ENCODE measurements at regions of chr12 and their contacts with region 1.

Region 1: DNA sequence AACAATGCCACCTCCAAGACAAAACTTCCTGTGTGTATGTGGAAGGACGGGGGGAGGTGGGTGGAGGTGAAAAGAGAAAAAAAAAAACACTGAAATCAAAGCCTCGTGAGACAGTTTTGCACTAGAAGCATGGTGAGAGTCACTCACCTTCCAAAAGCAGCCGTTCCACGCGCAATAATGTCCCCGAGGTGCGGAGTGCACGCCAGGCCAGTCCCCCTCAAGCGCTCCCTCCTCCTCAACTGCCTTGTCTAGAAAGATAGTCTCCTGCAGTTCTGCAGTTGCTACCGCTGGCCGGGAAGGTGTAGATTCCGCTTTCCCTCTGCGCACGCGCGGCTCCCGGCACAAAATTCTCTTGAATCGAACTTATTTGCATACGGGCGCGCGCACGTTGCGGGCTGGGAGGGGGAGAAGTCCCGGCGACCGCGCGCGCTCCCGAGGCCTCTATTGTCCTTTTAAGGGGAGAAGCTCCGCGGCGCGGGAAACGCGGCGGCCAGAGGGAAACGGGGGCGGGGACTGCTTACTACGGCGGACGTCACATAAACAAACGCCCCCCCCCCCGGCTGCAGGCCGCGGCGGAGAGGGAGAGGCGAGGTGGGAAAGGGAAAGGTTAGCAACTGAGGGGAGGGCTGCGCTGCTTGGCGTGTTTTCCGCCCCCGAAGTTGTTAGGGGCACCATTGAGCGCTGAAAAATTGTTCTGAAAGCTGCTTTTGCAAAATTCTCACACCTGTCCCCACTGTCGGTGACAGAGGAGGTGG is at the start of gene SINHCAF:
- DNase-seq: peak; percentile 97 to 99 (median 98)
- ATAC-seq: peak; percentile 78
- H3K4me3 ChIP-seq: peak within 1 kb of the TSS; percentile 82
- H3K4me3 Mint-ChIP-seq: peak within 1 kb of the TSS; percentile 89 to 99 (median 96)
- H3K27ac ChIP-seq: peak within 1 kb of the TSS; percentile 93
- H3K27ac Mint-ChIP-seq: peak within 1 kb of the TSS; percentile 81 to 99 (median 93)
- H3K4me1 ChIP-seq: peaks cover 5 to 22% of the 10 kb centered on the region in 2 donors
- H3K4me1 Mint-ChIP-seq: peaks cover 20 to 37% (median 26%) of the 10 kb centered on the region in 7 donors
- H3K27me3 ChIP-seq: no peaks in the 10 kb centered on the region
- H3K27me3 Mint-ChIP-seq: peaks cover 0 to 17% (median 0%) of the 10 kb centered on the region in 5 donors
- total RNA-seq, gene SINHCAF: 80.5 to 114 (median 90.8) TPM

Region 2: DNA sequence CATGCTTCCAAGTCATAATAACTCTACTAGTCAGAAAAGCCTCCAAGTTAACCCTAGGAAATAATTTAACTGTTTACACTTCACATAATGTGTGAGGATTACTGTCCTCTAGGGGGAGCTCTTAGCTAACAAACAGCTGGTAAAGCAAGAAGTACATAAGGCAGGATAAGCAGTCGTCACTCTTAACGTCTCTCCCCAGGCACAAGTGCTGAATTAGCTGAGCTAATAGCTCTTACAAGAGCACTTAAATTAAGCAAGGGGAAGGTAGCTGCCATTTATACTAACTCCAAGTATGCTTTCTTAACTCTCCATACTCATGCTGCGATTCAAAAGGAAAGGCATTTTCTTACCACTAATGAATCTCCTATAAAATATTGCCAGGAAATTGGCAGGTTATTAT is 478.8 kb before region 1 on chr12:
- CTCF ChIA-PET with region 1: no interaction called
- POLR2A ChIA-PET with region 1: no interaction called
- intact Hi-C with region 1: loop called in 1 of 2 experiments (anchors 2 kb)
- DNase-seq: peak in 6 of 9 donors; percentile 37 to 55 (median 41)
- ATAC-seq: peak; percentile 26
- H3K4me3 ChIP-seq: no peak overlapping the region
- H3K4me3 Mint-ChIP-seq: no peak overlapping the region
- H3K27ac ChIP-seq: no peak overlapping the region
- H3K27ac Mint-ChIP-seq: no peak overlapping the region
- H3K4me1 ChIP-seq: no peaks in the 10 kb centered on the region
- H3K4me1 Mint-ChIP-seq: peaks cover 5 to 13% (median 8%) of the 10 kb centered on the region in 7 donors
- H3K27me3 ChIP-seq: no peaks in the 10 kb centered on the region
- H3K27me3 Mint-ChIP-seq: peaks cover 0 to 13% (median 0%) of the 10 kb centered on the region in 5 donors

Region 3: GRCh38 chr12:31406345-31406744 is 80.3 kb after region 1 on chr12:
- CTCF ChIA-PET with region 1: no interaction called
- POLR2A ChIA-PET with region 1: no interaction called
- intact Hi-C with region 1: loop called in 1 of 2 experiments (anchors 5 kb)
- DNase-seq: no peak
- ATAC-seq: no peak
- H3K4me3 ChIP-seq: no peak overlapping the region
- H3K4me3 Mint-ChIP-seq: no peak overlapping the region
- H3K27ac ChIP-seq: no peak overlapping the region
- H3K27ac Mint-ChIP-seq: peak overlapping the region in 1 of 9 donors; percentile 1
- H3K4me1 ChIP-seq: no peaks in the 10 kb centered on the region
- H3K4me1 Mint-ChIP-seq: peaks cover 0 to 7% (median 0%) of the 10 kb centered on the region in 7 donors
- H3K27me3 ChIP-seq: no peaks in the 10 kb centered on the region
- H3K27me3 Mint-ChIP-seq: peaks cover 0 to 2% (median 0%) of the 10 kb centered on the region in 5 donors

Region 4: DNA sequence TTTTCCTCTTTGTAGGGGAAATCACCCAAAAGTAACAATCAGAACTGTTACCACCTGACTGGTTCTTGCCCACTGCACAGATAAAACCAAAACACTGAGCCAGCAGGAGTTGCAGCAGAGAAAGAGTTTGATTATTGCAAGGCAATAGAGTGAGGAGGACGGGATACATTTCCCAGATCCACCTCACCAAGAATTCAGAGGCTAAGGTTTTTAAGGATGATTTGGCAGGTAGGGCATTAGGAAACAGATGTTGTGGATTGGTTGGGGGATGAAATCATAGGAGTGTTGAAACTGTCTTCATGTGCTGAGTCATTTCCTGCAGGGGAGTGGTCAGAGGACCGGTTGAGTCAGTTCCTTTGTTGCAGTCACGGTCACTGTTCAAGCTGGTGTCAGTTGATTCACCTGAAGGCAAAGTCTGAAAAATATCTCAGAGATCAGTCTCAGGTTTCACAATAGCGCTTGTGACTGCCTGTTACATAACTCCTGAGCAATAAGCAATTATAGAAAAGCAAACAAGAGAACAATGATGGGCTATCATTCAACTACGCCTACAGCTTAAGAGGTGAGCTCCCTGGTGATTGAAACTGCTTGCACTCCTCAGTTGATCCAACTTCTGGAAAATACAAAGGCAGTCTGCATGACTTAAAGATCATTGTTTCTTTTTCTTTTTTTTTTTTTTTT is 423.1 kb after region 1 on chr12:
- CTCF ChIA-PET with region 1: no interaction called
- POLR2A ChIA-PET with region 1: no interaction called
- intact Hi-C with region 1: loop called (anchors 5 kb)
- DNase-seq: peak in 1 of 9 donors; percentile 57
- ATAC-seq: peak; percentile 89
- H3K4me3 ChIP-seq: peak overlapping the region; percentile 34
- H3K4me3 Mint-ChIP-seq: peak overlapping the region in 7 of 10 donors; percentile 21 to 66 (median 38)
- H3K27ac ChIP-seq: no peak overlapping the region
- H3K27ac Mint-ChIP-seq: peak overlapping the region in 8 of 9 donors; percentile 14 to 83 (median 63)
- H3K4me1 ChIP-seq: peaks cover 18 to 20% of the 10 kb centered on the region in 2 donors
- H3K4me1 Mint-ChIP-seq: peaks cover 31 to 76% (median 65%) of the 10 kb centered on the region in 7 donors
- H3K27me3 ChIP-seq: no peaks in the 10 kb centered on the region
- H3K27me3 Mint-ChIP-seq: no peaks in the 10 kb centered on the region

Region 5: GRCh38 chr12:32106517-32107358 is 780.7 kb after region 1 on chr12 and contains the start of gene BICD1:
- CTCF ChIA-PET with region 1: no interaction called
- POLR2A ChIA-PET with region 1: no interaction called
- intact Hi-C with region 1: loop called in 1 of 2 experiments (anchors 2 kb)
- DNase-seq: peak; percentile 43 to 84 (median 65)
- ATAC-seq: peak; percentile 90
- H3K4me3 ChIP-seq: peak within 1 kb of the TSS; percentile 90
- H3K4me3 Mint-ChIP-seq: peak within 1 kb of the TSS; percentile 82 to 98 (median 96)
- H3K27ac ChIP-seq: peak within 1 kb of the TSS; percentile 67
- H3K27ac Mint-ChIP-seq: peak within 1 kb of the TSS; percentile 77 to 94 (median 91)
- H3K4me1 ChIP-seq: peaks cover 19 to 22% of the 10 kb centered on the region in 2 donors
- H3K4me1 Mint-ChIP-seq: peaks cover 11 to 42% (median 33%) of the 10 kb centered on the region in 7 donors
- H3K27me3 ChIP-seq: no peaks in the 10 kb centered on the region
- H3K27me3 Mint-ChIP-seq: peaks cover 0 to 13% (median 0%) of the 10 kb centered on the region in 5 donors
- total RNA-seq, gene BICD1: 16.7 to 25.1 (median 18.5) TPM

Region 6: GRCh38 chr12:32755654-32756475 is 1429.8 kb after region 1 on chr12 and contains the start of gene YARS2:
- CTCF ChIA-PET with region 1: no interaction called
- POLR2A ChIA-PET with region 1: interaction called, 3 read pairs
- intact Hi-C with region 1: loop called (anchors 1 to 2 kb)
- DNase-seq: peak; percentile 62 to 86 (median 83)
- ATAC-seq: peak; percentile 92
- H3K4me3 ChIP-seq: peak within 1 kb of the TSS; percentile 68
- H3K4me3 Mint-ChIP-seq: peak within 1 kb of the TSS; percentile 84 to 99 (median 90)
- H3K27ac ChIP-seq: peak within 1 kb of the TSS; percentile 76
- H3K27ac Mint-ChIP-seq: peak within 1 kb of the TSS; percentile 81 to 99 (median 94)
- H3K4me1 ChIP-seq: peaks cover 13% of the 10 kb centered on the region in 2 donors
- H3K4me1 Mint-ChIP-seq: peaks cover 0 to 21% (median 20%) of the 10 kb centered on the region in 7 donors
- H3K27me3 ChIP-seq: no peaks in the 10 kb centered on the region
- H3K27me3 Mint-ChIP-seq: peaks cover 0 to 4% (median 0%) of the 10 kb centered on the region in 5 donors
- total RNA-seq, gene YARS2: 11.3 to 24.0 (median 17.9) TPM